Right ventricle myocardium inferior (tissue), 1 donor: ENCODE measurements at regions of chr7 and their contacts with region 1.

Region 1: DNA sequence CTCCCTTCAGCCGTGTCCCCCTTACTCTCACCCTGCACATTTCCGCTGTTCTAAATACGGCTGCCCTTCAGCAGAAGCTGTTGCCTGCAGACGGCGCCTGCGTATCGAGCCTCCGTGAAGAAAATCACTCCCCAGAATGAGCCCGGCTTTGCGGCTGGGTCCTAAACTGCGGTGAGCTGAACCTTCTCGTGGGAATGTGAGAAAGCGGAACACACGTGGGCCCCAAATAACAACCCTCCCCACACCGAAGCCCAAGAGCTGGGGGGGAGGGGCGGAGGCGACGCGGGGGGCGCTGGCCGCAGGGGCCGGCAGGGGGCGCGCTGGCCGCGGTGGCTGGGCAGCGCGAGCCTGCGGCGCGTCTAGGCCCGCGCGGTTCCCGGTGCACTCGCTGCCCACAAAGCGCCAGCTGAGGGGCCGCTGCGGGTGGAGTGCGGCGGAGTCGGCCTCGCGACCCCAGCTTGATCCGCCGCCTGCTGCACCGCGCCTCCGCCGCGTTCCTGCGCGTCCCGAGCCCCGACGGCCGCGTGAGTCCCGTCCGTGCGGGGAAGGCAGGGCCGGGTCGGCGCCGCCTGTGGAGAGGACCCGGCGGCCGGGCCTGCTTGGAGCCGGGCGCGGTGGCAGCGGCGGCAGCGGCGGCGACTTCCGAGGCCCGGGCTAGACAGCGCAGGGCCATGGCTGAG is at the start of gene ZNF398:
- DNase-seq: peak; percentile 89
- ATAC-seq: peak; percentile 93
- total RNA-seq, gene ZNF398: 7.0 TPM

Region 2: GRCh38 chr7:149060156-149060555 is 87.1 kb before region 1 on chr7:
- intact Hi-C with region 1: no loop called
- DNase-seq: no peak
- ATAC-seq: no peak

Region 3: GRCh38 chr7:149097088-149097487 is 50.1 kb before region 1 on chr7:
- intact Hi-C with region 1: no loop called
- DNase-seq: no peak
- ATAC-seq: no peak

Region 4: GRCh38 chr7:149125863-149126661 is 21.1 kb before region 1 on chr7 and contains the start of gene ZNF425:
- intact Hi-C with region 1: loop called (anchors 1 kb)
- DNase-seq: peak; percentile 96
- ATAC-seq: peak; percentile 97
- total RNA-seq, gene ZNF425: 0.60 TPM